PC-9 (cell line): ENCODE measurements at regions of chr6 and their contacts with region 1.

Region 1: GRCh38 chr6:98039869-98040607 is 757.0 kb upstream of the MMS22L start:
- DNase-seq: peak in 1 of 2 experiments; percentile 6
- H3K4me3 ChIP-seq: no peak overlapping the region
- H3K27ac ChIP-seq: no peak overlapping the region
- H3K4me1 ChIP-seq: no peaks in the 10 kb centered on the region
- H3K27me3 ChIP-seq: no peaks in the 10 kb centered on the region
- CTCF ChIP-seq: peak; percentile 49; the same call in 1 of the 2 replicates

Region 2: DNA sequence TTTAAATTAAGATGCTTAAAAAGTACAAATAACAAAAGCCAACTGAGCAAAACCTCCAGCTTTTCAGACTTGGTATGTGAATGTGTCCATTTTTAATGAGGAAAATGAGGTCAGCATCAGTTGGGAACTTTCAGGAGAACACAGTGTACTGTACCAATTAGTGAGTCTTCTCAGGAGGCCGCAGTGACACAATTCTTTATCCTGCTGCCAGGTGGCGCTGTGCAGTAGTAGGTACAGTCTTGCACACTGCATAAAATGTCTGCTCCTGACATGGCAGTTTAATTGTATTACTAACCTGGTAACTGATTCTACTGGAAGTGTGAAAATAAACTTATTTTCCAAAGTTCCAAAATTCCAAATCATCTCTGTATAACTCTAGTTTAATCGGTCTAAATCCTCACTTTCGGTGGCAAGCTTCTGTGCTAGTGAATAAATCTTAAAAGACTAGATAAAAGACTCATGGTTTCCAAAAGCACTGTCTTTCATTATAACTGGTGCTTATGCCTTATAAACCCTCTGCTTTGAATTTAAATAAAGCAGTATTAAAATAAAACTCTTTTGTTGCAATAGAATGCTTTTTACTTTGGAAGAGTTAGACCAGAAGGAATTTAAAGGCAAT is 542.2 kb before region 1 on chr6:
- CTCF ChIA-PET with region 1: no interaction called
- POLR2A ChIA-PET with region 1: no interaction called
- intact Hi-C with region 1: loop called (anchors 1 kb)
- DNase-seq: peak; percentile 49 to 54
- H3K4me3 ChIP-seq: no peak overlapping the region
- H3K27ac ChIP-seq: no peak overlapping the region
- H3K4me1 ChIP-seq: no peaks in the 10 kb centered on the region
- H3K27me3 ChIP-seq: no peaks in the 10 kb centered on the region
- CTCF ChIP-seq: peak; percentile 93

Region 3: GRCh38 chr6:97626671-97627441 is 413.2 kb before region 1 on chr6:
- CTCF ChIA-PET with region 1: no interaction called
- POLR2A ChIA-PET with region 1: no interaction called
- intact Hi-C with region 1: no loop called
- DNase-seq: no peak
- H3K4me3 ChIP-seq: peak overlapping the region; percentile 20; the same call in 1 of the 2 replicates
- H3K27ac ChIP-seq: no peak overlapping the region
- H3K4me1 ChIP-seq: no peaks in the 10 kb centered on the region; the same call in 1 of the 2 replicates
- H3K27me3 ChIP-seq: no peaks in the 10 kb centered on the region
- CTCF ChIP-seq: no peak

Region 4: GRCh38 chr6:97705568-97705967 is 334.5 kb before region 1 on chr6:
- CTCF ChIA-PET with region 1: no interaction called
- POLR2A ChIA-PET with region 1: no interaction called
- intact Hi-C with region 1: loop called (anchors 1 kb)
- DNase-seq: no peak
- H3K4me3 ChIP-seq: no peak overlapping the region
- H3K27ac ChIP-seq: no peak overlapping the region
- H3K4me1 ChIP-seq: no peaks in the 10 kb centered on the region
- H3K27me3 ChIP-seq: no peaks in the 10 kb centered on the region
- CTCF ChIP-seq: peak; percentile 53; the same call in 1 of the 2 replicates